Endothelial cell of umbilical vein (primary cell): ENCODE measurements at regions of chr7 and their contacts with region 1.

Region 1: GRCh38 chr7:108874852-108875538 is 305.3 kb downstream of the DNAJB9 start:
- DNase-seq: peak; percentile 35
- H3K4me3 ChIP-seq: no peak overlapping the region
- H3K27ac ChIP-seq: no peak overlapping the region
- H3K4me1 ChIP-seq: no peaks in the 10 kb centered on the region
- H3K27me3 ChIP-seq: no peaks in the 10 kb centered on the region
- CTCF ChIP-seq: peak; percentile 35 to 48
- POLR2A ChIP-seq: no peak

Region 2: DNA sequence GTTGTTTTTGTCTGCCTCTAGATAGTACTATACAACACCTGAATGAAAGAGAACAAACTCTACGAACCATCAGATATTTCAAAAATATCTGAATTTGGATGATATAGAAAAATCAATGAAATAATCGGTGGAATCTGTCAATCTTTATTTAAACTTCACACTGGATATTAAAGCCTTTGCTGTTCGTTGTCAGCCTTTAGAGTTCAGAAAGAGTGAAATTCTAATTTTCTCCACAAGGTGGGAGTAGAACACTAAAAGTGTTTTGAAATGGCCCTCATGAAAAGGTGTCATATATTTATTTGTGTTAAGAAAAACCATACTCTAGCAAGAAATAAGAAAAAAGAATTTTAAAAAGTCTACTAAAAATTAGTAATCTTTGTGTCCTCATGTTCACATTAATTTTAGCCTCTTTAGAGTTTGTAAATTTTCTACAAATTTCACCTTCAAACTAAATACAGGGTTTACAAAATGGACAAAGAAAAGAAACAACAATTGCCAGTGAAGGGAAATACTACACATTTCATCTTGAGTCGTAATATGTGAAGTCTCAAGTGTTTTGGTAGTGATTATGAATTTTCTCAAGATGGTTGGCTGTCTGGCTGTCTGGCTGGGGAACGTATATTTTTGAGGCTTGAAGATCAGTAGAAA is 261.8 kb before region 1 on chr7:
- CTCF ChIA-PET with region 1: interaction called, 5 read pairs
- POLR2A ChIA-PET with region 1: no interaction called
- dilution Hi-C with region 1: no loop called
- intact Hi-C with region 1: loop called (anchors 1 kb)
- DNase-seq: peak; percentile 59
- H3K4me3 ChIP-seq: no peak overlapping the region
- H3K27ac ChIP-seq: no peak overlapping the region
- H3K4me1 ChIP-seq: no peaks in the 10 kb centered on the region
- H3K27me3 ChIP-seq: peaks cover 3 to 11% of the 10 kb centered on the region in 2 experiments
- CTCF ChIP-seq: peak; percentile 30 to 35
- POLR2A ChIP-seq: no peak

Region 3: GRCh38 chr7:108660460-108660859 is 214.5 kb before region 1 on chr7:
- CTCF ChIA-PET with region 1: interaction called, 6 read pairs
- POLR2A ChIA-PET with region 1: no interaction called
- dilution Hi-C with region 1: no loop called
- intact Hi-C with region 1: loop called (anchors 1 kb)
- DNase-seq: peak; percentile 6
- H3K4me3 ChIP-seq: no peak overlapping the region
- H3K27ac ChIP-seq: no peak overlapping the region
- H3K4me1 ChIP-seq: no peaks in the 10 kb centered on the region
- H3K27me3 ChIP-seq: no peaks in the 10 kb centered on the region
- CTCF ChIP-seq: peak; percentile 21 to 30
- POLR2A ChIP-seq: no peak

Region 4: GRCh38 chr7:108805808-108806397 is 69.1 kb before region 1 on chr7:
- CTCF ChIA-PET with region 1: interaction called, 11 read pairs
- POLR2A ChIA-PET with region 1: no interaction called
- dilution Hi-C with region 1: no loop called
- intact Hi-C with region 1: no loop called
- DNase-seq: peak; percentile 14
- H3K4me3 ChIP-seq: no peak overlapping the region
- H3K27ac ChIP-seq: no peak overlapping the region
- H3K4me1 ChIP-seq: no peaks in the 10 kb centered on the region
- H3K27me3 ChIP-seq: peaks cover 2 to 9% of the 10 kb centered on the region in 2 experiments
- CTCF ChIP-seq: peak; percentile 29 to 30
- POLR2A ChIP-seq: no peak